Activated CD4-positive, alpha-beta memory T cell treated with anti-CD3 and anti-CD28 coated beads, Interleukin-2, amount 10 ng/mL, durations not matched to agents 7 days and 5 days (primary cell): ENCODE measurements at regions of chr1 and their contacts with region 1.

Region 1: GRCh38 chr1:84781946-84782771 is 91.9 kb upstream of the SSX2IP start:
- DNase-seq: peak; percentile 80
- H3K4me3 Mint-ChIP-seq: peak overlapping the region; percentile 59
- H3K27ac Mint-ChIP-seq: no peak overlapping the region
- H3K4me1 Mint-ChIP-seq: peaks cover 16% of the 10 kb centered on the region
- H3K27me3 Mint-ChIP-seq: peaks cover 2% of the 10 kb centered on the region

Region 2: DNA sequence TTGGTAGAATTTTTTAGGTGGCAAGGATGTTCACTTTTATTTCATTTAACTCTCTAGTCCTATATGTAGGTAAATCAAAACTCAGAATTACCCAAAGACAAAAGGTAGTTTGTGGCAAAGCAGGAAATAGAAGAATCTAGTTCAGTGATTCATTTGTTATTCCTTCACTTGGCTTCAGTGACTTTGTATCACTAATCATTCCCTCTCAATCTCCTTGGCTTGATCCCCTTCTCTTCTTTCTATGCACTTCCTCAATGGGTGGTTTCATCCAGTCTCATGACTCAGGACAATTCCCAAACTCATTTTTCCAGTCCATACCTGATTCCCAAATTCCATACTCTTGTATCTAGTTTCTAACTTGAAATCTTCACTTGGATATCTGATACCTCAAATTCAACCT is 573.2 kb before region 1 on chr1:
- CTCF ChIA-PET with region 1: no interaction called
- POLR2A ChIA-PET with region 1: no interaction called
- DNase-seq: no peak
- H3K4me3 Mint-ChIP-seq: no peak overlapping the region
- H3K27ac Mint-ChIP-seq: peak overlapping the region; percentile 18
- H3K4me1 Mint-ChIP-seq: no peaks in the 10 kb centered on the region
- H3K27me3 Mint-ChIP-seq: no peaks in the 10 kb centered on the region

Region 3: DNA sequence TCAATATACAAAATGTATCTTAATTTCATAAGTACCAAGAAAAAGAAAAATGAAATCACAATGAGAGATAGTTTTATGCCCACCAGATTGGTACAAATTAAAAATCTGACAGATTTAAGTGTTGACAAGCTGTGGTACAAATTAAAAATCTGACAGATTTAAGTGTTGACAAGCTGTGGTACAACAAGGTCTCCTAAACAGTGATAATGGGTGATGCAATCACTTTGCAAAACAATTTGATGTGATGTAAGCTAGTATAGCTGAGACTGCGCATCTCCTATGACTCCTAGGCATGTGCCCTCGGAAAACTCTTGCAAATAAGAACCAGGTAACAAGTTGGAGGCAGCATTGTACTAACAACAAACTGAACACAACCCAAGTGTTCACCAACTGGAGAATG is 10.3 kb after region 1 on chr1:
- CTCF ChIA-PET with region 1: interaction called, 13 read pairs
- POLR2A ChIA-PET with region 1: no interaction called
- DNase-seq: no peak
- H3K4me3 Mint-ChIP-seq: no peak overlapping the region
- H3K27ac Mint-ChIP-seq: no peak overlapping the region
- H3K4me1 Mint-ChIP-seq: no peaks in the 10 kb centered on the region
- H3K27me3 Mint-ChIP-seq: peaks cover 7% of the 10 kb centered on the region

Region 4: DNA sequence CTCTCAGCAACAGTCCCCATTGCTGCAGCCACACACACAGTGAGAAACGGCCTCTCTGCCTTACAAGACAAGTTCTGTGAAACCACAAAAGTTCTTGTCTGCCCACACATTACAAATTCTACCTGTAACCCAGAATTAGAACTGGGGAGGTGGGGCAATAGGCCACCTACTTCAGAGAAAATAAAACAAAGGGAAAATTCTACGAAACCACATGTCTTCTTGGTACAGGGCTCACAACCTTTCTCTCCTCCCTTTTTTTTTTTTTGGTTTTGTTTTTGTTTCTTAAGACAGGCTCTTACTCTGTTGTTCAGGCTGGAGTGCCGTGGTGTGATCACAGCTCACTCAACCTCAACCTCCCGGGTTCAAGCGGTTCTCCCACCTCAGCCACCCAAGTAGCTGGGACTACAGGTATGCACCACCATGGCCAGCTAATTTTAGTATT is 80.7 kb after region 1 on chr1:
- CTCF ChIA-PET with region 1: interaction called, 10 read pairs
- POLR2A ChIA-PET with region 1: no interaction called
- DNase-seq: peak; percentile 59
- H3K4me3 Mint-ChIP-seq: peak overlapping the region; percentile 64
- H3K27ac Mint-ChIP-seq: peak overlapping the region; percentile 89
- H3K4me1 Mint-ChIP-seq: peaks cover 41% of the 10 kb centered on the region
- H3K27me3 Mint-ChIP-seq: no peaks in the 10 kb centered on the region

Region 5: GRCh38 chr1:84878876-84879275 is 96.7 kb after region 1 on chr1:
- CTCF ChIA-PET with region 1: no interaction called
- POLR2A ChIA-PET with region 1: no interaction called
- DNase-seq: no peak
- H3K4me3 Mint-ChIP-seq: no peak overlapping the region
- H3K27ac Mint-ChIP-seq: no peak overlapping the region
- H3K4me1 Mint-ChIP-seq: peaks cover 6% of the 10 kb centered on the region
- H3K27me3 Mint-ChIP-seq: peaks cover 11% of the 10 kb centered on the region